Activated T-helper 1 cell treated with anti-CD3 and anti-CD28 coated beads, Interleukin-12 subunit alpha, Interleukin-12 subunit beta, Interleukin-2, Interleukin-4 antibody, amounts not matched to agents 30 ng/mL and 10 ng/mL and 1 ng/mL, durations not matched to agents 14 hours and 24 hours and 36 hours (primary cell): ENCODE measurements at regions of chr4 and their contacts with region 1.

Region 1: GRCh38 chr4:122617597-122618593 is 3.0 kb downstream of the IL21 start:
- DNase-seq: no peak
- H3K4me3 Mint-ChIP-seq: peak overlapping the region; percentile 93
- H3K27ac Mint-ChIP-seq: peak overlapping the region; percentile 93
- H3K4me1 Mint-ChIP-seq: peaks cover 67% of the 10 kb centered on the region
- H3K27me3 Mint-ChIP-seq: no peaks in the 10 kb centered on the region

Region 2: DNA sequence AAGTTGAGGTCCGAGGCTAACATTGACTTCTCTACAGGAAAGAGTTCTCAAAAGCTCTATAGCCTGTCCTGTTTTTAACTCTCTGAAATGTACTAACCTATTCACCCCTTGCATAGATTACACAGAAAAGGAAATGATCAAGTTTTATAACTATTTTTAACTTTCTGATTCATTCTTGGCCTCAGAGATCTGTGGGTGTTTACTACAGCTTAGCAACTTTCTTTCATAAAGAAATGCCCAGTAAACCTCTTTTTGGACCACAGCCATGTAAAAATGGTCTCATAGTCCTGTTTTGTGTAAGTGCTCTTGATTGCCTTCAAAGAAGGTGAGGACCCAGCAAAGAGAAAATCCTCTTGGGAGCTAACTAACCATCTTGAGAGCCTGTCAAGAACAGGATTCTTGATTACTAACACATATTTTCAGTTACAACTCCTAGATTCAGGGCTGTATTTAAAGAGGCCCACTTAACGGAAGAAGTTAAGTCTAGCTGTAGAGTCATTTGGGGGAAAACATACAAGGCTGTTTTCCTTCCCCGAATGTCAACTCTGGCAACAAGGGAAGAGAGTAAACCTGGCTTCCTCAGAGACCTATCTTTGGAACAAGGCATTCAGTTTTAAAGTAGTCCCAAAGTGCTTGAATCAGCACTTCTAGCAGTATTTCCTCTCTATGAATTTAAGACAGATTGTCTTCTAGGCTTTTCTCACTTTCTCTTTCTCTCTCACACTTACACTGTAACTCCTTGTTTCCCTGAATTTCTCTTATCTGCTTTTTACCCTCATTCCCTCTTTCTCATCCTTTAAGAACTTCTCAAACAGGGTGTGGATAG is 75.3 kb before region 1 on chr4:
- intact Hi-C with region 1: loop called (anchors 1 kb)
- DNase-seq: no peak
- H3K4me3 Mint-ChIP-seq: peak overlapping the region; percentile 71
- H3K27ac Mint-ChIP-seq: peak overlapping the region; percentile 93
- H3K4me1 Mint-ChIP-seq: peaks cover 85% of the 10 kb centered on the region
- H3K27me3 Mint-ChIP-seq: no peaks in the 10 kb centered on the region

Region 3: DNA sequence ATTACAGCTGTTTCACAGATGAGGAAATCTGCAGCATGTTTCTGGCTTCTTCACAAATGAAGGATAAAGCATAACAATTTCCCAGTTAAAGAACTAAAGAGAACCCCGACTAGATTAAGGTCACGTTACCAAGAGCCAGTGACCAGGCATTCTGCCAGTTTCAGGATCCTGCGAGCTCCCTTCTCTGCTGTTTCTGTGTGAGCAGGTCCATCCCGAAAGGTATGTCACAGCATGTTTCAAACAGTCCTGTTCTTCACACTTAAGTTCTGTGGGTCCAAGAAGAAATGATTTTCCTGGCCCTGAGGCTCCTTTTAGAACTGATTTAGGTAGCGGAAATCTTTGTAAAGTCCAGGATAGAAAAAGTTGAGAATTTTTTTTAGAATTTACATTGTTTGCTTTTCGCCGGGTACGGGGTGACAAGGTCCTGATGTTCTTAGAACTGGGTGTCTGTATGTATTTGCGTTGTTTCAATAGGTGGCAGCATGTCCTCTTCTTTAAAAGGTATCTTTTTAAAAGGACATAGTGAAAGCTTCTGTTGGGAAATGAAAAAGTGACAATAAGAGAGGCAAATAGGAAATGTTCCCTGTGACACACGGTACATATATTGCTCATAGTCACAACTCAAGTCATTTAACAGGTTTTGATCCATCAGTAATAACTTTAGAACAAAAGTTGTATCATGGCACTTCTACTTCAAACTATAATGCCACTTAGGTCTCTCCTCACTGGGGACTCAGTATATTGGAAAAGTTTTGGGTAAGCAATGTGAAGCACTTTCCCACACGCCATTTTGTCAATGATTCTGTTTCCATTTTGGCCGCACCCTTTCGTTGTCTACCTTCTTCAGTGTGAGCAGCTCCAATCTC is 15.4 kb before region 1 on chr4:
- intact Hi-C with region 1: loop called (anchors 1 kb)
- DNase-seq: no peak
- H3K4me3 Mint-ChIP-seq: peak overlapping the region; percentile 54
- H3K27ac Mint-ChIP-seq: peak overlapping the region; percentile 55
- H3K4me1 Mint-ChIP-seq: peaks cover 43% of the 10 kb centered on the region
- H3K27me3 Mint-ChIP-seq: no peaks in the 10 kb centered on the region

Region 4: GRCh38 chr4:122658818-122659295 is 41.0 kb after region 1 on chr4:
- intact Hi-C with region 1: loop called (anchors 1 kb)
- DNase-seq: no peak
- H3K4me3 Mint-ChIP-seq: peak overlapping the region; percentile 66
- H3K27ac Mint-ChIP-seq: peak overlapping the region; percentile 94
- H3K4me1 Mint-ChIP-seq: peaks cover 59% of the 10 kb centered on the region
- H3K27me3 Mint-ChIP-seq: no peaks in the 10 kb centered on the region

Region 5: DNA sequence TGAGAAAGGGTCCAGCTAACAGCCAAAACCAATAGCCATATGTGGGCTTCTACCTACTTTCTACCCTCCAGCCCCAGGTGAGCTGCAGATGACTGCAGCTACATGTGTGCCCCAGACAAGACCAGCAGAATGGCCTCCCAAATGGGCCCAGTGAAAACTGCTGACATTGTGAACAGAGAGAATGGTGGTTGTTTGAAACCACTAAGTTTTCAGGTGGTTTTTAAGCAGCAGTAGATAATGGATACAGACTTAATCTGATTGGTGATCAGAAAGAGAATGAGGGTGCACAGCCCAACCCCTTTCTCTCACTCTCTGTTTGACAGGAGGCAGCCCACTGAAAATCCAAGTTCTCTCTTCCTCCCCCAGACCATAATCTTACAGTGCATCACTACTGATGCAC is 72.1 kb after region 1 on chr4:
- intact Hi-C with region 1: loop called (anchors 2 kb)
- DNase-seq: peak; percentile 22
- H3K4me3 Mint-ChIP-seq: peak overlapping the region; percentile 43
- H3K27ac Mint-ChIP-seq: peak overlapping the region; percentile 71
- H3K4me1 Mint-ChIP-seq: peaks cover 66% of the 10 kb centered on the region
- H3K27me3 Mint-ChIP-seq: no peaks in the 10 kb centered on the region

Region 6: GRCh38 chr4:122716825-122717448 is 99.0 kb after region 1 on chr4:
- intact Hi-C with region 1: loop called (anchors 1 kb)
- DNase-seq: peak; percentile 55
- H3K4me3 Mint-ChIP-seq: peak overlapping the region; percentile 25
- H3K27ac Mint-ChIP-seq: peak overlapping the region; percentile 81
- H3K4me1 Mint-ChIP-seq: peaks cover 46% of the 10 kb centered on the region
- H3K27me3 Mint-ChIP-seq: peaks cover 2% of the 10 kb centered on the region

Region 7: DNA sequence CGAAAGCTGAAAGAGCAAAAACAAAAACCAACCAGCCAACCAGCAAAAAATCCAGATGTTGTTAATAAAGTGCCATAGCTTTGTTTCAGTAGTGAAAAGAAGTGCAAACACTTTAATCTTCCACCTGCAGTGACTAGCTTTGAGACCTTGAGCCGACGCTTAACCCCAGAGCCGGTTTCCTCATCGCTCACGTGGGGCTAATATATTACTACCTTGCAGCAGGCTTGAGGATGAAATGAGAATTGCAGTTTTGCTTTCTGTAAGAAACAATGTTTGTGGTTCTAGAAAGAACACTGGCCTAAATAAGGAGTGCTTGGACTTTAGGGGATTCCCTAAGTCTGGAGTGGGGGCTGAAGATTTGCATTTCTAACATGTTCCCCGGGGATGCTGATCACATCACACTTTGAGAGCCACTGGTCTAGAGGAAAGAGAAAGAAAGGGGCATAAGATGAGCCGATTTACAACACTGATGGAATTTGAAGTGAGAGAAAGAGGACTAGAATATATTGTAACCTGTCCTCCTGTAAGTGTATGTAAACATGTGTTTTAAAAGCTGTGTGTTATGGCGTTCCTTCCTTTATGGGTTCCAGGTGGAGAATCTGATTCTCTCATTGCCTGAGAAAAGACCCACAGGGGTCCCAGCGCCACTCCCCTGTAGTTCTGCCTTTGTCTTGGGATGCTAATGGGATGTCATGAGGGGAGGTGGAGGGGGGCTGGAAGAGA is 210.1 kb after region 1 on chr4:
- intact Hi-C with region 1: loop called (anchors 5 kb)
- DNase-seq: peak; percentile 40
- H3K4me3 Mint-ChIP-seq: peak overlapping the region; percentile 78
- H3K27ac Mint-ChIP-seq: peak overlapping the region; percentile 64
- H3K4me1 Mint-ChIP-seq: peaks cover 34% of the 10 kb centered on the region
- H3K27me3 Mint-ChIP-seq: peaks cover 39% of the 10 kb centered on the region